ENCODE measurements at regions of chr20 and their contacts with region 1.

Region 1: GRCh38 chr20:5749952-5750779 is at the start of gene SHLD1:
- DNase-seq: peak; percentile 80 to 91
- ATAC-seq: peak; percentile 96 to 99 (median 98)
- H3K4me3 ChIP-seq: peak within 1 kb of the TSS; percentile 45 to 76 (median 66)
- H3K27ac ChIP-seq: peak within 1 kb of the TSS; percentile 80 to 93 (median 84)
- H3K4me1 ChIP-seq: peaks cover 0 to 13% (median 7%) of the 10 kb centered on the region in 9 donors
- H3K27me3 ChIP-seq: no peaks in the 10 kb centered on the region
- CTCF ChIP-seq: no peak
- total RNA-seq, gene SHLD1: 3.2 to 8.5 (median 4.8) TPM

Region 2: DNA sequence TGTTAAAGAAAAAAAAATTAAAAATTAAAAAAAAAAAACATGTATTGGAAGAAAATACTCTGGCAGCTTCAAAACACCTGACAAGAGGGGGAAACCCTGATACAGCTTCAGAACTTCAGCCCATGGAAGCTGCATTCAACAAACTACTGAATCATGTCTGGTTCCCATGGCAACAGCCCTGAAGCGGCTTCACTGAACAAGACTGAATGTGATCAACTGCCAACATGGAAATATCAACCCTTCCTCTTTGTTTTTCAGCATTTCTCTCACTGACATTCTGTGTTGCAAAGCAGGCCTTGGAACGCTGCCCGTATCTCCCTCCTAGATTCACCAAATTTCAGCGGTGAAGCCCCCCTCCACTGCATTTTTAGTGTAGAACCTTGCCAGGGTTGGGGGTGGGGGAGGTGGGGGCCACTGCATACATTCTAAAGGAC is 91.2 kb before region 1 on chr20:
- intact Hi-C with region 1: loop called in 1 of 10 experiments (anchors 5 kb)
- DNase-seq: peak; percentile 33 to 63
- ATAC-seq: peak; percentile 25 to 76 (median 60)
- H3K4me3 ChIP-seq: no peak overlapping the region
- H3K27ac ChIP-seq: peak overlapping the region in 8 of 10 donors; percentile 28 to 82 (median 59)
- H3K4me1 ChIP-seq: peaks cover 9 to 67% (median 34%) of the 10 kb centered on the region in 9 donors
- H3K27me3 ChIP-seq: no peaks in the 10 kb centered on the region
- CTCF ChIP-seq: no peak

Region 3: GRCh38 chr20:5714261-5715041 is 35.7 kb before region 1 on chr20:
- intact Hi-C with region 1: loop called in 1 of 10 experiments (anchors 5 kb)
- DNase-seq: peak in 1 of 2 donors; percentile 32
- ATAC-seq: peak; percentile 75 to 90 (median 80)
- H3K4me3 ChIP-seq: no peak overlapping the region
- H3K27ac ChIP-seq: peak overlapping the region in 9 of 10 donors; percentile 26 to 69 (median 36)
- H3K4me1 ChIP-seq: peaks cover 0 to 40% (median 17%) of the 10 kb centered on the region in 9 donors
- H3K27me3 ChIP-seq: no peaks in the 10 kb centered on the region
- CTCF ChIP-seq: no peak